ENCODE measurements at regions of chr12 and their contacts with region 1.

Region 1: GRCh38 chr12:111405149-111405860 is 418 bp upstream of the SH2B3 start:
- DNase-seq: peak; percentile 93 to 97 (median 95)
- ATAC-seq: peak; percentile 78 to 91 (median 84)
- H3K4me3 ChIP-seq: peak overlapping the region; percentile 62 to 98 (median 92)
- H3K27ac ChIP-seq: peak overlapping the region; percentile 12 to 99 (median 97)
- H3K4me1 ChIP-seq: peaks cover 26 to 72% (median 62%) of the 10 kb centered on the region in 12 donors
- H3K27me3 ChIP-seq: no peaks in the 10 kb centered on the region
- CTCF ChIP-seq: peak; percentile 54 to 87 (median 69)
- POLR2A ChIP-seq: peak in 1 of 2 donors; percentile 37

Region 2: GRCh38 chr12:111274777-111275176 is 130.5 kb before region 1 on chr12:
- intact Hi-C with region 1: no loop called
- DNase-seq: no peak
- ATAC-seq: no peak
- H3K4me3 ChIP-seq: no peak overlapping the region
- H3K27ac ChIP-seq: no peak overlapping the region
- H3K4me1 ChIP-seq: no peaks in the 10 kb centered on the region
- H3K27me3 ChIP-seq: peaks cover 0 to 62% (median 2%) of the 10 kb centered on the region in 9 donors
- CTCF ChIP-seq: peak in 3 of 12 donors; percentile 10 to 25 (median 14)
- POLR2A ChIP-seq: no peak

Region 3: GRCh38 chr12:111424793-111425251 is 19.5 kb after region 1 on chr12:
- intact Hi-C with region 1: loop called in 2 of 10 experiments (anchors 1 kb)
- DNase-seq: no peak
- ATAC-seq: peak in 3 of 4 donors; percentile 13 to 39 (median 28)
- H3K4me3 ChIP-seq: no peak overlapping the region
- H3K27ac ChIP-seq: peak overlapping the region; percentile 76 to 95 (median 90)
- H3K4me1 ChIP-seq: peaks cover 6 to 98% (median 74%) of the 10 kb centered on the region in 12 donors
- H3K27me3 ChIP-seq: no peaks in the 10 kb centered on the region
- CTCF ChIP-seq: peak in 5 of 12 donors; percentile 8 to 39 (median 28)
- POLR2A ChIP-seq: no peak

Region 4: DNA sequence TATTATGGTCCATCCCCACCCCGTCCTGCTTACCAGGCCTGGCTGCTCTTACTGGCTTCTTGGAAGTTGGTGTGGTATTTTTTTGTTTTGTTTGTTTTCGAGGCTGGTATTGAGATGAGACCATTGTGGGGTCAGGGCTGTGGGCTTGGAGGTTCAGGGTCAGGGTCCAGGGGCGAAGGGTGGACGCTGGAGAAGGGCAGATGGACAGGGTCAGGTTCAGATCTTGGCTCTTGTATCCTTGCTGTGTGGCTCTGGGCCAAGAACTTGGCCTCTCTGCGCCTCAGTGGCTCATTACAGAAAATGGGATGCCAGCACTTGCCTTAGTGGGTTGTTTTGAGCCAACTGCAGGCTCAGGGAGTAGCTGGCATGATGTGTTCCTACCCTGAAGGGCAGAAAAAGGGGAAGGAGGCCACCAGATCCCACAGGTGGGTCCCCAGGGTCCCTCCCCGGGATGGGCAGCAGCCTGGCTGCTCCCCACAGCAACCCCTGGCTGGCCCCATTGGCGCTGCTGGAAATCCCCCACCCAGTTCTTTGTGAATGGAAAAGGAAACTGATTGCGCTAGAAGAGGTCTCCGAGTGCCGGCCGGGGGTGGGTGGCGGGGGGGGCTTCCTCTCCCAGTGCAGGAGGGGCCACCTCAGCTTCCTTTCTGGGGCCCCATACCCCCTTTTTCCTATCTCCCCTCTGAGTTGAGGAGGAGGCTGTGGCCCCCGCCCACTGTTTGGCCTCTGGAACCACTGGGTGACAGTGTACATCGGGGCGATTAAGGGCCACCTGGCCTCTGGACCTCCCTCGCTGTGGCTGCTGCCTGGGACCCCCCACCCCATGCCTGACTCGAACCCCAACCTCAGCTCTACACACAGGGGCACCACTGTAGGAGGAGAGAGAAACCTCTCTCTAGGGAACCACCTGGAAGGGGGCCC is 25.4 kb after region 1 on chr12:
- intact Hi-C with region 1: loop called in 2 of 10 experiments (anchors 1 kb)
- DNase-seq: peak in 3 of 5 donors; percentile 44 to 68 (median 64)
- ATAC-seq: peak in 1 of 4 donors; percentile 34
- H3K4me3 ChIP-seq: peak overlapping the region in 6 of 12 donors; percentile 8 to 41 (median 24)
- H3K27ac ChIP-seq: peak overlapping the region; percentile 62 to 95 (median 89)
- H3K4me1 ChIP-seq: peaks cover 23 to 100% (median 98%) of the 10 kb centered on the region in 12 donors
- H3K27me3 ChIP-seq: no peaks in the 10 kb centered on the region
- CTCF ChIP-seq: peak in 2 of 12 donors; percentile 7 to 20
- POLR2A ChIP-seq: no peak

Region 5: GRCh38 chr12:111444925-111445725 is 39.8 kb after region 1 on chr12:
- intact Hi-C with region 1: loop called in 4 of 10 experiments (anchors 2 to 5 kb)
- DNase-seq: peak; percentile 74 to 83 (median 80)
- ATAC-seq: peak; percentile 48 to 77 (median 68)
- H3K4me3 ChIP-seq: peak overlapping the region in 1 of 12 donors; percentile 12
- H3K27ac ChIP-seq: peak overlapping the region in 11 of 12 donors; percentile 29 to 89 (median 79)
- H3K4me1 ChIP-seq: peaks cover 19 to 100% (median 95%) of the 10 kb centered on the region in 12 donors
- H3K27me3 ChIP-seq: no peaks in the 10 kb centered on the region
- CTCF ChIP-seq: peak in 3 of 12 donors; percentile 9 to 17 (median 12)
- POLR2A ChIP-seq: no peak

Region 6: GRCh38 chr12:111451649-111452129 is 46.4 kb after region 1 on chr12:
- intact Hi-C with region 1: loop called in 4 of 10 experiments (anchors 2 to 5 kb)
- DNase-seq: no peak
- ATAC-seq: peak in 1 of 4 donors; percentile 2
- H3K4me3 ChIP-seq: no peak overlapping the region
- H3K27ac ChIP-seq: peak overlapping the region in 8 of 12 donors; percentile 45 to 89 (median 76)
- H3K4me1 ChIP-seq: peaks cover 10 to 77% (median 58%) of the 10 kb centered on the region in 12 donors
- H3K27me3 ChIP-seq: no peaks in the 10 kb centered on the region
- CTCF ChIP-seq: peak; percentile 72 to 88 (median 80)
- POLR2A ChIP-seq: no peak

Region 7: GRCh38 chr12:111458590-111459172 is 53.4 kb after region 1 on chr12:
- intact Hi-C with region 1: loop called in 1 of 10 experiments (anchors 2 kb)
- DNase-seq: no peak
- ATAC-seq: no peak
- H3K4me3 ChIP-seq: no peak overlapping the region
- H3K27ac ChIP-seq: no peak overlapping the region
- H3K4me1 ChIP-seq: peaks cover 0 to 35% (median 14%) of the 10 kb centered on the region in 12 donors
- H3K27me3 ChIP-seq: no peaks in the 10 kb centered on the region
- CTCF ChIP-seq: no peak
- POLR2A ChIP-seq: no peak